ENCODE measurements at regions of chrX and their contacts with region 1.

Region 1: DNA sequence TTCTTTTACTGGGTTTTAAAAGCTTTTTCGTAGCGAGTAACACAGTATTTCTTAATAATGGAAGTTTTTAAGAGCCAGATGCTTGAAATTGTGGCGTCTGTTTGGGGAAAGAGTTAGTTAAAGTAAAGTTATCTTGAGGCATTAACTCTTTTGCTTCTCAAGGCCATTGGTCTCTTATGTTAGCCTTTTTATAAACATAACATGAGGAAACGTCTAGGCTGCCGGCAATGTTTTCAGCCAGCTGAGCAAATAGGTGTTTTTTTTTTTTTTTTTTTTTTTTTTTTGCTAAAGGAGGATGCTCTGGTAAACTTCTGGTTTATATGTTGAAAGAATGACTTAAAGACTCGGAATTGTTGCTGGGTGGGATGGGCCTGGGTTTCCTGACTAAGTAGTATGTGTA is 51.1 kb upstream of the RBMX start:
- DNase-seq: no peak
- ATAC-seq: no peak
- H3K4me3 ChIP-seq: no peak overlapping the region
- H3K4me3 Mint-ChIP-seq: no peak overlapping the region
- H3K27ac ChIP-seq: no peak overlapping the region
- H3K27ac Mint-ChIP-seq: no peak overlapping the region
- H3K4me1 ChIP-seq: peaks cover 0 to 5% of the 10 kb centered on the region in 2 experiments
- H3K4me1 Mint-ChIP-seq: peaks cover 14 to 18% (median 18%) of the 10 kb centered on the region in 3 donors
- H3K27me3 ChIP-seq: no peaks in the 10 kb centered on the region
- H3K27me3 Mint-ChIP-seq: peaks cover 0 to 9% of the 10 kb centered on the region in 2 donors

Region 2: GRCh38 chrX:136725446-136726104 is 206.1 kb before region 1 on chrX:
- CTCF ChIA-PET with region 1: interaction called in 1 of 2 experiments, 15 read pairs
- POLR2A ChIA-PET with region 1: no interaction called
- DNase-seq: no peak
- ATAC-seq: no peak
- H3K4me3 ChIP-seq: no peak overlapping the region
- H3K4me3 Mint-ChIP-seq: no peak overlapping the region
- H3K27ac ChIP-seq: no peak overlapping the region
- H3K27ac Mint-ChIP-seq: peak overlapping the region; percentile 27 to 70
- H3K4me1 ChIP-seq: peaks cover 6% of the 10 kb centered on the region in 2 experiments
- H3K4me1 Mint-ChIP-seq: peaks cover 18 to 27% (median 21%) of the 10 kb centered on the region in 3 donors
- H3K27me3 ChIP-seq: no peaks in the 10 kb centered on the region
- H3K27me3 Mint-ChIP-seq: no peaks in the 10 kb centered on the region